ENCODE measurements at regions of chr10 and their contacts with region 1.

Region 1: DNA sequence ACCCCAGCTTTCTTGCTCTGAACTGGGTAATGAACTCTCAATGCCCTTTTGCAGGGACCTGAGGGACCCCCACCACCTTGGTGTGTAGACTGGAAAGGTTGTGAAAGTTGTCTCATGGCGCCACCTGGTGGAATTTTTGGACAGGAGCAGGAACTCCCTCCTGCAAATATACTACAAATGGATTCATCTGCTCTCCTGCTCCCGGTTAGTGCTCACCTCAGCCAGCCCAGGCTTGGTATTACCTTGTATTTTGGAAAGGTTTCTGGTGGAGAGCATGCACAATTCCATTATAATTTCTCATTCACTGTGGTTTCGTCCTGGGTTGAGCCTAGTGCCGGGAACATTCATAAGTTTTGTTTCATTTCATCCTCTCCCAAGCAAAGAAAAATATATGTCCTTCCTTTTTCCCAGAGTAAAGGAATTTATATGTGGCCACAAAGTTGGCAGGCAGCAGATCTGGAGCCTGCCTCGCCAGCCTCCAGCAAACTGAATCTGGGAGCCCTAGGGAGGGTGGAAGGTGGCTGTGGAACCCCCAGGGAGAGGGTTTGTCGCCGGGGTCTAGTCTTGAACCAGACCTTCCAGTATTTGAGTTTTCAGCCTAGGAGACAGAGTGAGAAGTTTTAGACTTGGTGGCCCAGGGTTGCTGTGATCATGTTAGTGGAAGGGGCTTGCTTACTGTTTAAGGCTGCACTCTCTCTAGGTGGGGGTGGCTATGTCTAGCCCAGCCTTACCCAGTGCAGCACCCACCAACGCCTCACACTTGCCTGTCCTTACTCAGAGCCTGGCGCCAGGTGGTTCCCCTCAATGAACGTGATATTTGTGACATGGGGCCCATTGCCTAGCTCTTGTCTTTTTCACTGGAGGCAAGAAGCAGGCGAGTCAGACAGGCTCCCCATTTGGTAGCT is 9.5 kb downstream of the FAM241B start:
- DNase-seq: peak; percentile 57
- ATAC-seq: peak; percentile 70

Region 2: GRCh38 chr10:69425511-69426298 is 213.8 kb before region 1 on chr10:
- intact Hi-C with region 1: loop called (anchors 5 kb)
- DNase-seq: no peak
- ATAC-seq: no peak

Region 3: DNA sequence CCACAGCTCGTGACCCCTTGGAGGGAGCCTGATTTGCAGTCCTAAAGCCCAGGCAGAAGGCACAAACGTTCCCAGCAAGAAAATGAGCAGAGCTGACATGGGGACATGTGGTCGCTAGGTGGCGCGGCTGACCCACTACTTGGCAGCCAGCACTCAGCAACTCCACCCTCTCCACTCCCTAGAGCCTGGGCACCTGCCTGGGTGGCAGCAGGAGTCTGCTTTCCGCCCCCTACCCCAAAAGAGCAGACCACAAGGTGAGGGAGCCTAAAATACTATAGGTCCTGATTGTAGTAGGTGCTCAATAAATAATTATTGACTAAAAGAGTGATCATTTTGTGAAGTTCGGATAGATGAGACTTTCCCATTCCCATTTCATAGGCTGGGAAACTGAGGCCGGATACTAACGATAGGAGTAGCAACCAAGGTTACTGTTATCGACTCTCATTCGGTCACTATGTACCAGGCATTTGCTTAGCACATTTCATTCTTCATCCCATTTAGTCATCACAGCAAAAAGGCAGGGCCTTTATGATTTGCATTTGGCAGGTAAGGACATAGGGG is 123.8 kb before region 1 on chr10:
- intact Hi-C with region 1: loop called (anchors 2 kb)
- DNase-seq: peak; percentile 84
- ATAC-seq: peak; percentile 88